ENCODE measurements at regions of chr1 and their contacts with region 1.

Region 1: GRCh38 chr1:41241782-41242341 is at the start of gene SCMH1:
- DNase-seq: peak; percentile 38 to 67
- H3K4me3 ChIP-seq: peak within 1 kb of the TSS; percentile 62
- H3K4me3 Mint-ChIP-seq: peak within 1 kb of the TSS; percentile 80
- H3K27ac Mint-ChIP-seq: peak within 1 kb of the TSS; percentile 53
- H3K4me1 ChIP-seq: peaks cover 60% of the 10 kb centered on the region
- H3K4me1 Mint-ChIP-seq: peaks cover 21% of the 10 kb centered on the region
- H3K27me3 ChIP-seq: no peaks in the 10 kb centered on the region
- H3K27me3 Mint-ChIP-seq: no peaks in the 10 kb centered on the region
- CTCF ChIP-seq: no peak
- total RNA-seq, gene SCMH1: 25.6 and 27.6 TPM in 2 replicates

Region 2: GRCh38 chr1:41122851-41123507 is 118.9 kb before region 1 on chr1:
- CTCF ChIA-PET with region 1: no interaction called
- POLR2A ChIA-PET with region 1: no interaction called
- intact Hi-C with region 1: loop called (anchors 10 kb)
- DNase-seq: peak; percentile 59
- H3K4me3 ChIP-seq: no peak overlapping the region
- H3K4me3 Mint-ChIP-seq: no peak overlapping the region
- H3K27ac Mint-ChIP-seq: no peak overlapping the region
- H3K4me1 ChIP-seq: no peaks in the 10 kb centered on the region
- H3K4me1 Mint-ChIP-seq: peaks cover 2% of the 10 kb centered on the region
- H3K27me3 ChIP-seq: no peaks in the 10 kb centered on the region
- H3K27me3 Mint-ChIP-seq: no peaks in the 10 kb centered on the region
- CTCF ChIP-seq: peak in 1 of 2 experiments; percentile 52

Region 3: GRCh38 chr1:41151846-41152245 is 90.0 kb before region 1 on chr1:
- CTCF ChIA-PET with region 1: no interaction called
- POLR2A ChIA-PET with region 1: no interaction called
- intact Hi-C with region 1: loop called (anchors 1 kb)
- DNase-seq: no peak
- H3K4me3 ChIP-seq: no peak overlapping the region
- H3K4me3 Mint-ChIP-seq: no peak overlapping the region
- H3K27ac Mint-ChIP-seq: no peak overlapping the region
- H3K4me1 ChIP-seq: peaks cover 19% of the 10 kb centered on the region
- H3K4me1 Mint-ChIP-seq: peaks cover 6% of the 10 kb centered on the region
- H3K27me3 ChIP-seq: no peaks in the 10 kb centered on the region
- H3K27me3 Mint-ChIP-seq: no peaks in the 10 kb centered on the region
- CTCF ChIP-seq: no peak